Naive thymus-derived CD4-positive, alpha-beta T cell (primary cell): ENCODE measurements at regions of chr1 and their contacts with region 1.

Region 1: DNA sequence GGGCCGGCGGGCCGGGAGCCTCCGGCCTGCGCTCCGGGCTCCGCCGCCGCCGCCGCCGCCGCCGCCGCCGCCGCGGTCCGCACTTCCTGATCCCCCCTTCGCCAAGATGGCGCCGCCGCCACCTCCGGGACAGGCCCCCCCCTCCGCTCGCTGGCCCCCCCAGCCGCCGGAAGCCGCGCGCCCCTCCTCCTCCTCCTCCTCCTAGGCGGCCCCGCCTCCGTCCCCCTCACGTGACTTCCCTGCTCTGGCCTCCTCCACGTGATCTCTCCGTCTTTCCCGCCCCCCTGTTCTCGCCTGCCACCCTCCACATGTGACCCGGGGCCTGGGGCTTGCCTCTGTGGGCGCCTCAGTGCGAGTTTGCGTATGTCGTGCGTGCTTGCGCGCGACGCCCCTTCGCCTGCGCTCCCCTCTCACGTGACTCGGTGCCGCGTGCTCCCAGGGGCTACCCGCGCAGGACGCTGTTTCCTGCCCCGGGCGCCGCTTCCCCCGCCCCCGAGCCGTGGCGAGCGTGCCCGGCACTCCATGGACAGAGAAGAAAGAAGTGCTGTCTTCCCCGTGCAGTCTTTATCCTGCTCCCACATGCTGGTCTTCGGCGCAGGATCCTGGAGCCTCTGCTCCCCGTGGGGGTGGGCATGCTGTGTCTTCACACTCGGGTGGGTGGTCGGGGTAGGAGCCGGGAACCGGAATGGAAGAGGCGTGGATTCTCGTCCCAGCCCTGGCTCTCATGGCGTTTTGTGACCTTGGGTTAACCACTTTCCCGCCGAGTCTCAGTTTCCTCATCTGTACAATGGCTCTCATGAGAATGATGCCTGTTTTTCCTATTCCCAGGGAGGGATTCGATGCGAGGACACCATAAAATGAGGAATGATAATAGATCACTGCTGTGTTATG is at the start of gene UBE2Q1:
- DNase-seq: peak; percentile 92 to 100 (median 100)
- ATAC-seq: peak; percentile 94
- H3K4me3 ChIP-seq: peak within 1 kb of the TSS; percentile 81
- H3K4me3 Mint-ChIP-seq: peak within 1 kb of the TSS; percentile 89 to 98 (median 96)
- H3K27ac ChIP-seq: peak within 1 kb of the TSS; percentile 86
- H3K27ac Mint-ChIP-seq: peak within 1 kb of the TSS; percentile 90 to 97 (median 94)
- H3K4me1 ChIP-seq: peaks cover 18 to 23% of the 10 kb centered on the region in 2 donors
- H3K4me1 Mint-ChIP-seq: peaks cover 12 to 45% (median 39%) of the 10 kb centered on the region in 7 donors
- H3K27me3 ChIP-seq: no peaks in the 10 kb centered on the region
- H3K27me3 Mint-ChIP-seq: peaks cover 0 to 2% (median 0%) of the 10 kb centered on the region in 5 donors
- total RNA-seq, gene UBE2Q1: 63.2 to 117 (median 106) TPM

Region 2: GRCh38 chr1:154220071-154220969 is 338.5 kb before region 1 on chr1 and contains the start of gene UBAP2L:
- CTCF ChIA-PET with region 1: no interaction called
- POLR2A ChIA-PET with region 1: interaction called, 3 read pairs
- intact Hi-C with region 1: loop called (anchors 1 kb)
- DNase-seq: peak; percentile 92 to 99 (median 99)
- ATAC-seq: peak; percentile 91
- H3K4me3 ChIP-seq: peak within 1 kb of the TSS; percentile 95
- H3K4me3 Mint-ChIP-seq: peak within 1 kb of the TSS; percentile 83 to 100 (median 98)
- H3K27ac ChIP-seq: peak within 1 kb of the TSS; percentile 99
- H3K27ac Mint-ChIP-seq: peak within 1 kb of the TSS; percentile 96 to 100 (median 99)
- H3K4me1 ChIP-seq: peaks cover 42 to 45% of the 10 kb centered on the region in 2 donors
- H3K4me1 Mint-ChIP-seq: peaks cover 46 to 76% (median 64%) of the 10 kb centered on the region in 7 donors
- H3K27me3 ChIP-seq: no peaks in the 10 kb centered on the region
- H3K27me3 Mint-ChIP-seq: peaks cover 0 to 4% (median 0%) of the 10 kb centered on the region in 5 donors
- total RNA-seq, gene UBAP2L: 183 to 235 (median 189) TPM

Region 3: DNA sequence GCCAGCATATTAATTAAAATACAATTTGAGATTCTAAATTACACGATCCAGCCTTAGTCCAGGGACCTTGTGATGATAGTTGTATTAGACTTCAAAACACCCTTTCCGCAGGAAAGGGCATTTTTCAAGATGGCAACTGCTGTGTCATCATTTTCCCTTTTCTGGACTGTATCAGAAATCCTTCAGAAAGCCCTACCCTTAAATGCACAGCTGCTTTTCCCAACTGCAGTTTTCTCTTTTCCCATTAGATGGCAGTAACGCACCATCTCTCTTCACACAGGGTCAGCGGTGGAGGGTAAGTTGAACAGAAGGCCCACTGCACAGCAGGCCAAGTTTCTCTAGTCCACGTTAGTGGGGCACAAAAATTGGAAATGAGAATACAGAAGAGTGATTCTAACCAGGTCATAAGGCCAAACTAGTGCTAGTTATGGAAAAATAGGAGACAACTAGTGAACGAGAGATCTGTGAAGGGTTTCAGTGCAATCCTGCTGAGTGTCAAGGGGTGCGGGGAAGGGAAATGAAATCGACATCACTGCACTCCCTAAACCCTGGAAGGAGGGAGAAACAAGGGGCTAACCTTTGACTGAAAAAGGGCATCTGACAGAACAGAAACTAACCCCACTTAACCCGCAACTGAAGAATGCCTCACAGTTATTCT is 78.9 kb before region 1 on chr1:
- CTCF ChIA-PET with region 1: interaction called, 3 read pairs
- POLR2A ChIA-PET with region 1: interaction called, 3 read pairs
- intact Hi-C with region 1: loop called in 1 of 2 experiments (anchors 2 kb)
- DNase-seq: peak in 8 of 9 donors; percentile 39 to 78 (median 66)
- ATAC-seq: peak; percentile 90
- H3K4me3 ChIP-seq: no peak overlapping the region
- H3K4me3 Mint-ChIP-seq: no peak overlapping the region
- H3K27ac ChIP-seq: no peak overlapping the region
- H3K27ac Mint-ChIP-seq: peak overlapping the region in 1 of 9 donors; percentile 0
- H3K4me1 ChIP-seq: peaks cover 0 to 10% of the 10 kb centered on the region in 2 donors
- H3K4me1 Mint-ChIP-seq: peaks cover 12 to 27% (median 19%) of the 10 kb centered on the region in 7 donors
- H3K27me3 ChIP-seq: no peaks in the 10 kb centered on the region
- H3K27me3 Mint-ChIP-seq: peaks cover 0 to 14% (median 0%) of the 10 kb centered on the region in 5 donors

Region 4: GRCh38 chr1:154501423-154502065 is 57.3 kb before region 1 on chr1:
- CTCF ChIA-PET with region 1: no interaction called
- POLR2A ChIA-PET with region 1: no interaction called
- intact Hi-C with region 1: no loop called
- DNase-seq: peak in 2 of 9 donors; percentile 7 to 33
- ATAC-seq: peak; percentile 16
- H3K4me3 ChIP-seq: no peak overlapping the region
- H3K4me3 Mint-ChIP-seq: peak overlapping the region in 9 of 10 donors; percentile 27 to 71 (median 65)
- H3K27ac ChIP-seq: no peak overlapping the region
- H3K27ac Mint-ChIP-seq: peak overlapping the region in 1 of 9 donors; percentile 17
- H3K4me1 ChIP-seq: peaks cover 0 to 6% of the 10 kb centered on the region in 2 donors
- H3K4me1 Mint-ChIP-seq: peaks cover 7 to 29% (median 16%) of the 10 kb centered on the region in 7 donors
- H3K27me3 ChIP-seq: peaks cover 4 to 5% of the 10 kb centered on the region in 2 donors
- H3K27me3 Mint-ChIP-seq: peaks cover 26 to 73% (median 42%) of the 10 kb centered on the region in 5 donors

Region 5: DNA sequence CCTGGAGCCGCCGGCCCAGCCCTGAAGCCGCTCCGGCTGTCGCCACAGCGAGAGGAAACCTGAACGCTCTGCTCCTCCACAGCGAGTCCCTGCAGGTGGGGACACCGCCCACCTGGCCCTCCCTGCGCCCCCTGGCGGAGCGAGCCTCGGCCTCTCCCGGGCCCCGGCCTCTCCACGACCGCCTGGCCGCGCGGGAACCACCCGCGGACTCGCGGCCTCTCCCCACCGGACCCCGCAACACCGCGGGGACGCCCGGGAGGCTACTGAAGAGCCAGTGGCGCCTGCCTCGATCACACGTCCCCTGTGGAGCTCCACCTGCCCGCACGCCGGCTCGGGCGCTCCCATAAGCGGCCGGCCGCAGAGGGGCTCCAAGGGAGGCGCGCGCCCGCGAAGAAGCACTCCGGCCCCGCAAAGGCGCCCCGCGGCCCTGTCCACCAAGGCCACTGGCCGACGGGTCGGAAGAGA is 201.7 kb after region 1 on chr1:
- CTCF ChIA-PET with region 1: interaction called, 25 read pairs
- POLR2A ChIA-PET with region 1: interaction called, 3 read pairs
- intact Hi-C with region 1: loop called (anchors 1 kb)
- DNase-seq: peak; percentile 73 to 91 (median 83)
- ATAC-seq: peak; percentile 98
- H3K4me3 ChIP-seq: peak overlapping the region; percentile 47
- H3K4me3 Mint-ChIP-seq: peak overlapping the region; percentile 29 to 79 (median 74)
- H3K27ac ChIP-seq: peak overlapping the region; percentile 59
- H3K27ac Mint-ChIP-seq: peak overlapping the region in 5 of 9 donors; percentile 62 to 97 (median 79)
- H3K4me1 ChIP-seq: peaks cover 8 to 24% of the 10 kb centered on the region in 2 donors
- H3K4me1 Mint-ChIP-seq: peaks cover 24 to 47% (median 40%) of the 10 kb centered on the region in 7 donors
- H3K27me3 ChIP-seq: peaks cover 0 to 8% of the 10 kb centered on the region in 2 donors
- H3K27me3 Mint-ChIP-seq: peaks cover 0 to 23% (median 5%) of the 10 kb centered on the region in 5 donors

Region 6: GRCh38 chr1:154943649-154944400 is 385.0 kb after region 1 on chr1:
- CTCF ChIA-PET with region 1: interaction called, 3 read pairs
- POLR2A ChIA-PET with region 1: no interaction called
- intact Hi-C with region 1: loop called in 1 of 2 experiments (anchors 1 kb)
- DNase-seq: peak in 1 of 9 donors; percentile 57
- ATAC-seq: peak; percentile 43
- H3K4me3 ChIP-seq: no peak overlapping the region
- H3K4me3 Mint-ChIP-seq: peak overlapping the region in 6 of 10 donors; percentile 7 to 67 (median 26)
- H3K27ac ChIP-seq: peak overlapping the region; percentile 65
- H3K27ac Mint-ChIP-seq: peak overlapping the region; percentile 52 to 95 (median 88)
- H3K4me1 ChIP-seq: peaks cover 38 to 42% of the 10 kb centered on the region in 2 donors
- H3K4me1 Mint-ChIP-seq: peaks cover 43 to 60% (median 52%) of the 10 kb centered on the region in 7 donors
- H3K27me3 ChIP-seq: no peaks in the 10 kb centered on the region
- H3K27me3 Mint-ChIP-seq: no peaks in the 10 kb centered on the region

Region 7: GRCh38 chr1:155063550-155064110 is 504.8 kb after region 1 on chr1 and contains the start of gene EFNA4:
- CTCF ChIA-PET with region 1: interaction called, 3 read pairs
- POLR2A ChIA-PET with region 1: no interaction called
- intact Hi-C with region 1: loop called (anchors 1 kb)
- DNase-seq: peak; percentile 62 to 87 (median 86)
- ATAC-seq: peak; percentile 93
- H3K4me3 ChIP-seq: peak within 1 kb of the TSS; percentile 76
- H3K4me3 Mint-ChIP-seq: peak within 1 kb of the TSS; percentile 85 to 99 (median 95)
- H3K27ac ChIP-seq: peak within 1 kb of the TSS; percentile 69
- H3K27ac Mint-ChIP-seq: peak within 1 kb of the TSS; percentile 17 to 96 (median 83)
- H3K4me1 ChIP-seq: peaks cover 20 to 21% of the 10 kb centered on the region in 2 donors
- H3K4me1 Mint-ChIP-seq: peaks cover 21 to 42% (median 39%) of the 10 kb centered on the region in 7 donors
- H3K27me3 ChIP-seq: no peaks in the 10 kb centered on the region
- H3K27me3 Mint-ChIP-seq: no peaks in the 10 kb centered on the region
- total RNA-seq, gene EFNA4: 3.9 to 9.4 (median 7.7) TPM